ENCODE measurements at regions of chr16 and their contacts with region 1.

Region 1: GRCh38 chr16:18839555-18839954 is 38.2 kb upstream of the ARL6IP1 start:
- DNase-seq: peak; percentile 77
- H3K4me3 ChIP-seq: no peak overlapping the region
- H3K27ac ChIP-seq: peak overlapping the region; percentile 10
- H3K4me1 ChIP-seq: peaks cover 7% of the 10 kb centered on the region
- H3K27me3 ChIP-seq: no peaks in the 10 kb centered on the region
- CTCF ChIP-seq: no peak

Region 2: DNA sequence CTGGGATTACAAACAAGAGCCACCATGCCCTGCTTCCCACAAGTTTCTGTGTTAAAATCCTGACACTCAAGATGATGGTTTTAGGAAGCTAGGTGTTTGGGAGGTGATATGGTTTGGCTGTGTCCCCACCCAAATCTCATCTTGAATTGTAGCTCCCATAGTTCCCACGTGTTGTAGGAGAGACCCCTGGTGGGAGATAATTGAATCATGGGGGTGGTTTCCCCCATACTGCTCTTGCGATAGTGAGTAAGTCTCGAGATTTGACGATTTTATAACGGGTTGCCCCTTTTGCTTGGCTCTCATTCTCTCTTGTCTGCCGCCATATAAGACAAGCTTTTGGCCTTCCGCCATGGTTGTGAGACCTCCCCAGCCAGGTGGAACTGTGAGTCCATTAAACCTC is 103.9 kb after region 1 on chr16:
- CTCF ChIA-PET with region 1: no interaction called
- dilution Hi-C with region 1: loop called (anchors 5 kb)
- in situ Hi-C with region 1: no loop called
- intact Hi-C with region 1: no loop called
- DNase-seq: no peak
- H3K4me3 ChIP-seq: no peak overlapping the region
- H3K27ac ChIP-seq: no peak overlapping the region
- H3K4me1 ChIP-seq: no peaks in the 10 kb centered on the region
- H3K27me3 ChIP-seq: no peaks in the 10 kb centered on the region
- CTCF ChIP-seq: no peak